Upper lobe of right lung (tissue), 1 donor: ENCODE measurements at regions of chr9 and their contacts with region 1.

Region 1: DNA sequence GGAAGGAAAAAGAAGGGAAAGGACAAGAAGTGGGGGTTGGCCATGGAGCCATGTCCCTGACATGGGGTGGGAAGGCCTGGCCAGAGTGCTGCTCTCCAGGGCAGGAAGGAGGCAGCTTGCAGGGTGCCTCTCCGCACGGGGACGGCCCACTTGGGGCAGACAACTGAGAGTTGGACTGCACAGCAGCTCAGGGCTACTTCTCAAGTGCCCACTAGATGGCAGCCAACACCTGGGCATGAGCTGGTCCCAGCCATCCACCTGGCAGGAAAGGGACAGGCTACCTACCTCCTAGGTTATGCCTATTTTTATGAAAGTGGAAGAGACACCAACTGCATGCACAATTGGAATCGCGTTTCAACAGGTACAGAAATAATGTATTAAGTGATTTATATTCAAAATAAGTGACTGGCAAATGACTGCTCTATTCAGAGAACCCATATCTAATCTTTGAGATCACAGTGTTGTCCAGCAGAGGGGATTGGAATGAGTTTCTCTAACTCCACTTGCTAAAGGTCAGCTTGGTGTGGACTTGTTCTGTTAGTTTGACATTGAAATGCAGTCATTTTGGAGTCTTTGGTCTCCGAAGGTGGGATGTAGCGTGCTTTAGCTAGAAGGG is 113.4 kb downstream of the SYK start:
- DNase-seq: peak; percentile 83
- ATAC-seq: peak; percentile 94
- H3K4me3 ChIP-seq: no peak overlapping the region
- H3K27ac ChIP-seq: no peak overlapping the region
- H3K4me1 ChIP-seq: no peaks in the 10 kb centered on the region
- H3K27me3 ChIP-seq: no peaks in the 10 kb centered on the region
- CTCF ChIP-seq: peak; percentile 95

Region 2: GRCh38 chr9:91433180-91433579 is 518.2 kb after region 1 on chr9:
- intact Hi-C with region 1: loop called (anchors 10 kb)
- DNase-seq: no peak
- ATAC-seq: peak; percentile 91
- H3K4me3 ChIP-seq: no peak overlapping the region
- H3K27ac ChIP-seq: no peak overlapping the region
- H3K4me1 ChIP-seq: no peaks in the 10 kb centered on the region
- H3K27me3 ChIP-seq: no peaks in the 10 kb centered on the region
- CTCF ChIP-seq: peak; percentile 60

Region 3: GRCh38 chr9:91522481-91522880 is 607.5 kb after region 1 on chr9:
- intact Hi-C with region 1: no loop called
- DNase-seq: no peak
- ATAC-seq: no peak
- H3K4me3 ChIP-seq: no peak overlapping the region
- H3K27ac ChIP-seq: no peak overlapping the region
- H3K4me1 ChIP-seq: no peaks in the 10 kb centered on the region
- H3K27me3 ChIP-seq: no peaks in the 10 kb centered on the region
- CTCF ChIP-seq: no peak